Sciatic nerve (tissue), 2 donors: ENCODE measurements at regions of chr14 and their contacts with region 1.

Region 1: DNA sequence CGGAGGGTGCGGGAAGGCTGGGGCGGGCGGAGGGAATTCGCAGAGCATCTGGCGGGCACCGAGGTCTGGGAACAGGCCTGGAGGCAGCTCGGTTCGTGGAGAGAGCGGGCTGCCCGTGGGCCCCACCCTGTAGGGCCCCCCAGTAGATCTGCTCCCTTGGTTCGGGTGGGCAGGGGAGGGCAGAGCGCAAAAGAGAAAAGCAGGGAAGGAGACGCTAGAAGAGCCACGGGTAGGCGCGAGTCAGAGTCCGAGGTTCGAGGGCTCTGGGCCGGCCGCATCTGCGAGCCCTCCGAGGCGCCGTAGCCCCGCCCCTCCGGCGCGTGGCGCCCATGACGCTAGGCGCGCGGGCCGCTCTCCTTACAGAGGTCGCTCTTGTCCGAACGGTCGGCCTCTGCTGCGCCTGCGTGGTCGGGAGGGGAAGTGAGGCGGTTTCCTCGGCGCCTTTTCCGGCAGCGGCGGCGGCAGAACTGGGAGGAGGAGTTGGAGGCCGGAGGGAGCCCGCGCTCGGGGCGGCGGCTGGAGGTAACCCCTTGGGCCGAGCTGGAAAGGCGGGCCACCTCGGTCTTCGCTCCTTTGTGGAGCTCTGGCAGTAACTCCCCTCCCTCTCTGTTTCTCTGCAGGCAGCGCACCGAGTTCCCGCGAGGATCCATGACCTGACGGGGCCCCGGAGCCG is at the start of gene ARF6:
- DNase-seq: peak; percentile 99
- ATAC-seq: peak; percentile 99
- total RNA-seq, gene ARF6: 46.1 TPM

Region 2: GRCh38 chr14:49982501-49982951 is 89.8 kb after region 1 on chr14:
- intact Hi-C with region 1: no loop called
- DNase-seq: no peak
- ATAC-seq: peak; percentile 74

Region 3: GRCh38 chr14:50003213-50004031 is 110.7 kb after region 1 on chr14:
- intact Hi-C with region 1: loop called (anchors 10 kb)
- DNase-seq: peak; percentile 87
- ATAC-seq: peak; percentile 51